Upper lobe of right lung (tissue), 1 donor: ENCODE measurements at regions of chr1 and their contacts with region 1.

Region 1: GRCh38 chr1:17502326-17502778 is 37.1 kb upstream of the ARHGEF10L start:
- DNase-seq: peak; percentile 92
- ATAC-seq: peak; percentile 99
- H3K4me3 ChIP-seq: no peak overlapping the region
- H3K27ac ChIP-seq: no peak overlapping the region
- H3K4me1 ChIP-seq: no peaks in the 10 kb centered on the region
- H3K27me3 ChIP-seq: peaks cover 4% of the 10 kb centered on the region
- CTCF ChIP-seq: peak; percentile 85

Region 2: DNA sequence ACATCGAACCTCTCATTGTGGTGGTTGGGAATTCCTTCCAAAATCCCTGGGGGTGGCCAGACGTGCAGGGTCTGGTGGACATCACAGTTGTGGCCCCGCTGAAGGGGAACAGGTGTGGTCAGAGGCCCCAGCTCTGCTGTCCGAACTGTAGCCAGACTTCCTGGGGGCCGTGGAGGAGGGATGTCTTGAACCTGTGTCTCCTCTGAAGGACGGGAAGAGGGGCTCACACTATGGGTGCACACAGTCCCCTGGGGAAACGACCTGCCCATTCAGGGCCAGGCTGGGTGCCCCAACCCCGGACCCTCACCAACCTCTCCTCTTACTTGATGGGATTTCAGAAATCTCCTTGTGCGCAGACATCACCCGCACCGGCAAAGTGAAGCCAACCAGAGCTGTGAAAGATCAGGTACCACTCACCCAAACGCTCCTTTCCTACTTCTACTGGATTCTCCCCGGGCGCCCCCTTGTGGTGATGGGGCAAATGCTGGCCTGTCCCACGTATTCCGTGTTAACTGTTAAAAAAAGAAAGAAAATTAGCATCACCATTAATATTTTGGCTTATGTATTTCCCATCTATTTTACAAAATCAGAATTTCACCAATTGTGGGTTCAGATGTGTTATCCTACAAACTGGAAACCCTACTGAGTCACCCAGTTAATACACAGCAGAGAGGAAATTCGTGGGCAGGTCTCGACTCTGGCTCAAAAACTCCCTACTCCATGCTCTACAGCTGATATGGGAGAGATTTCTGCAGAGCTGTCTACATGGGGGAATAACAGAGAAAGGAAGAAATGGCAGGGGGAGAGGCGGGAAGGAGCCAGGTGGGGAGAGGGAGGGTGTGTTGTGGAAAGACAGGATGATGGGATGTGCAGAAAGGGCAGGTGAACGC is 166.3 kb before region 1 on chr1:
- intact Hi-C with region 1: no loop called
- DNase-seq: peak; percentile 86
- ATAC-seq: peak; percentile 79
- H3K4me3 ChIP-seq: no peak overlapping the region
- H3K27ac ChIP-seq: no peak overlapping the region
- H3K4me1 ChIP-seq: no peaks in the 10 kb centered on the region
- H3K27me3 ChIP-seq: peaks cover under 1% of the 10 kb centered on the region
- CTCF ChIP-seq: peak; percentile 80

Region 3: DNA sequence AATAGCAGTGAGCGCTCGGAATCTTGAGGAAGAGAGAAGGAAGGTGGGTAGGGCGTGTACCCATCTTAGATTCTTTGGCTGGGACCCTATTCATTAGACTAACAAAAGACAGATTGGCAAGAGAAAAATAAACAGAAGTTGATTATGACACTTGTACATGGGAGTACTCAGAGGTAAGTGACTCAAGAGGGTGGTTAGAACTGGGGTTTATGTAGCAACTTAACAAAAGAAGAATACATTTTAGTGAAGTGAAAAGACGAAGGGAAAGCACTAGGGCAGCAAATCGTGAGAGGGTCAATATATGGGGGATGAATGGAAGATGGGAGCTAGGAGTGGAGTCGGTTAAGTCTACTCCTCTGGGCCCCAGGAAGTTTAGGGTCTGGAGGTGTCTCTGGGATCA is 37.1 kb before region 1 on chr1:
- intact Hi-C with region 1: no loop called
- DNase-seq: no peak
- ATAC-seq: no peak
- H3K4me3 ChIP-seq: no peak overlapping the region
- H3K27ac ChIP-seq: no peak overlapping the region
- H3K4me1 ChIP-seq: no peaks in the 10 kb centered on the region
- H3K27me3 ChIP-seq: no peaks in the 10 kb centered on the region
- CTCF ChIP-seq: no peak

Region 4: DNA sequence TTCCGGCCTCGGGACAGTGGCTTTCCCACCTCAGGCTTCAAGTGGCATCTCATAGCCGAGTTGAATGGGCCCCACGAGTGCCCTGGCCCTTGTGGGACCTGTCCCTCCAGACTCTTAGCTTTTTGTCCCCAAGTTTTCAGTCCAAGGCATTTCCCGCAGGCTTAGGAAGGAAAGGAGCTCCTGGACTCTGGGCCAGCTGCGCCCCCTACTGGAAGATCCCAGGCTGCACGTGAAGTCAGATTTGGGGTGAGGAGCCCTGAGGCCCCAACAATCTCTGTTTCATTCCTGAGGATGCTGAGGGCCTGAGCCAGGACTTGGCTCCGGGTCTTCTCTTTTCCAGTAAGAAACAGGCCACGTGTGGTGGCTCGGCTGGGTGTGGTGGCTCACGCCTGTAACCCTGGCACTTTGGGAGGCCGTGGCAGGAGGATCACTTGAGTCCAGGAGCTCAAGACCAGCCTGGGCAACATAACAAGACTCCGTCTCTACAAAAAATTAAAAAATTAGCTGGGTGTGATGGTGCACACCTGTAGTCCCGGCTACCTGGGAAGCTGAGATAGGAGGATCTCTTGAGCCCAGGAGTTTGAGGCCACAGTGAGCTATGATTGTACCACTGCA is 104.6 kb after region 1 on chr1:
- intact Hi-C with region 1: loop called (anchors 10 kb)
- DNase-seq: peak; percentile 89
- ATAC-seq: peak; percentile 80
- H3K4me3 ChIP-seq: no peak overlapping the region
- H3K27ac ChIP-seq: no peak overlapping the region
- H3K4me1 ChIP-seq: peaks cover 11% of the 10 kb centered on the region
- H3K27me3 ChIP-seq: no peaks in the 10 kb centered on the region
- CTCF ChIP-seq: peak; percentile 87

Region 5: DNA sequence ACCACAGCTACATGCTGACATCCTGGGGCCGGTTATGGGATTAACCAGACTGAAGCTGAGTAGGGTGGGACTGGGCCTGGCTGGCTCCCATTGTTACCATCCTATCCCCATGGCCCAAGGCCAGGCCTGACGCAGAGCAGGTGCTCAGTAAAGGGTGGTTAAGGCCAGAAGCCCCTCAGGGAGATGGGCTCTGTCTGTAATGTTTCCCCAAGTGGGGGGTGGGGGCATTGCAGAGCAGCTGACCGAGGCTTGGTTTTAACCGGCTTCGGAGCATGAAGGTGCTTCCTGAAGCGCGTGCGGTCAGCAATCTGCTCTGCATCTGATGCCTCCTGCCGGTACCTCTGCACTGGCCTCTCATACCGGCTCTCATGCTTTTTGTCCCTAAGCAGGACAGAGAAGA is 169.4 kb after region 1 on chr1:
- intact Hi-C with region 1: no loop called
- DNase-seq: no peak
- ATAC-seq: no peak
- H3K4me3 ChIP-seq: no peak overlapping the region
- H3K27ac ChIP-seq: no peak overlapping the region
- H3K4me1 ChIP-seq: no peaks in the 10 kb centered on the region
- H3K27me3 ChIP-seq: no peaks in the 10 kb centered on the region
- CTCF ChIP-seq: no peak